Kidney (tissue), 22 donors: ENCODE measurements at regions of chr12 and their contacts with region 1.

Region 1: GRCh38 chr12:120710031-120710804 is at the start of gene UNC119B:
- DNase-seq: peak; percentile 68 to 90 (median 80)
- H3K4me3 ChIP-seq: peak within 1 kb of the TSS; percentile 65 to 80 (median 73)
- H3K27ac ChIP-seq: peak within 1 kb of the TSS; percentile 69 to 83
- H3K4me1 ChIP-seq: peaks cover 3 to 17% (median 14%) of the 10 kb centered on the region in 3 donors
- H3K27me3 ChIP-seq: no peaks in the 10 kb centered on the region
- CTCF ChIP-seq: no peak
- total RNA-seq, gene UNC119B: 44.5 TPM

Region 2: DNA sequence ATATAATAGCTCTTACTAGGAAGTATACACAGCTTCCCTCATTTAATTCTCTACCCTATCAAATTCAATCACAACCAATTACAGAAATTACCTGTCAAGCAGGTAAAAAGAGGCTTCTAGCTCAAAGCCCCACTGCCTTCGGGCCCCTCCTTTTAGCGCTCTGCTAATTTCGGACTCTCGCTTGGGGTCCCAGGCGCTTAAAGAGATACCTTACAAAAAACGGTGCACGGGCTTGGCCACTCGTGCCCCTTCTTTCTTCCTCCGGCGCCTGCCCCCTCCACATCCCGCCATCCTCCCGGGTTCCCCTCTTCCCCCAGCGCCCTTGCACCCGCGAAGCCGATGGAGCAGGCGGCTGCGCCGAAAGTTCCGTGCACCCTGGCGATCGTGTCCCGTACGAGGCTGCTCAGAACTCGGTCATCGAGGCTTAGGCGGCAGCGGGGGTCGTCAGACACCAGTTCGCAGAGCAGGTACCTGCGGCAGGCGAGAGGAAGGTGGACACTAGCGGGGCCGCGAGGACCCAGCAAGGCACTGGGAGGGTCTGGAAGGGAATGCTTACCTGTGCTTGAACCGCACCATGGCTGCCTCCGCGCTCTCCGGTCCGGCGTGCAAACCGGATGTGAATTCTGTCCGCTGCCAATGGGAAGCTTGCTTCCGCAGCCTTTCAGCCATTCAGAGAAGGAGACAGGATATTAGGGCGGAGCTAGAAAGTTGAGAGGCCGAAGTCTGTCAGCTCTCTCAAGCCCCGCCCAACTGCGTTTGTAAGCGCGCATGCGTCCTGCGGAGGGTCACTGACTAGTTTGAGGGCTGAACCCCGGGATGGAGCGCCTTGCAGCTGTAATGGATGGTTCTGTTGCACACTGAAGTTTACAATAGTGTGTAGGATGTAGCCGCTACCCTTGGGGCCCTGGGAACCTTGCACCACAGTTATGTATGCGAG is 129.2 kb before region 1 on chr12 and contains the start of gene POP5:
- intact Hi-C with region 1: loop called (anchors 10 kb)
- DNase-seq: peak; percentile 96 to 99 (median 97)
- H3K4me3 ChIP-seq: peak within 1 kb of the TSS; percentile 80 to 91 (median 89)
- H3K27ac ChIP-seq: peak within 1 kb of the TSS; percentile 8 to 61
- H3K4me1 ChIP-seq: peaks cover 0 to 14% (median 2%) of the 10 kb centered on the region in 3 donors
- H3K27me3 ChIP-seq: peaks cover 3% of the 10 kb centered on the region
- CTCF ChIP-seq: no peak
- total RNA-seq, gene POP5: 50.0 TPM

Region 3: DNA sequence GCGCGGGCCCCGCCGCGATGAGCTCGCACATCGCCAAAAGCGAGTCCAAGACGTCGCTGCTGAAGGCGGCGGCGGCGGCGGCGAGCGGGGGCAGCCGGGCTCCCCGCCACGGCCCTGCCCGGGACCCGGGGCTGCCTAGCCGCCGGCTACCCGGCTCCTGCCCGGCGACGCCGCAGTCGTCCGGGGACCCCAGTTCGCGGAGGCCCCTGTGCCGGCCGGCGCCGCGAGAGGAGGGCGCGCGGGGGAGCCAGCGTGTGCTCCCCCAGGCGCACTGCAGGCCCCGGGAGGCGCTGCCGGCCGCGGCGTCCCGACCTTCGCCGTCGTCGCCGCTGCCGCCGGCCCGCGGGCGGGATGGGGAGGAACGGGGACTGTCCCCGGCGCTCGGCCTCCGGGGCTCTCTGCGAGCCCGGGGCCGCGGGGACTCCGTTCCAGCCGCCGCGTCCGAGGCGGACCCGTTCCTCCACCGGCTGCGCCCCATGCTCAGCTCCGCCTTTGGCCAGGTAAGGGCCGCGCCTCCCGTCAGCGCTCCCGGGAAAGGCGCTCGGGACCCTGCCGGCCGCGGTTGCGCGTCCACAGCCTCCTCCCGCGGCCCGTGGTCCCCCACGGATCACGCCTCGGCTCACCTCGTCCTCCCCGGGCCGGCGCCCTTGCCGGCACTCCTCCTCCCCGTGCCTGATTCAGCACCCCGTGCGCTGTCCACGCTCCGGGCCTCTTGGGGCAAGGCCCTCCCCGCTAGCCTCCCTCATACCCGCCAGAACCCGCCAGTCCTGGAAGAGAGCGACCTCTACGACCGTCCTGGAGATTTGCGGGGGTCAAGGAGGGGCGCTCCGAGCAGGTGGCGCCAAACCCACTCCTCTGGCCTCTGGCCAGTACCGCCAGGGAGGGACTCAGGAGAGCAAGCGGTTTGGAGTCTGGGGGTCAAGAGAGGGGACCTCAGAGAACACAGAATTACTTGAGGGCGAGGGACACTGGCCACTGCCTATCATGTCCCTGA is 69.1 kb before region 1 on chr12:
- intact Hi-C with region 1: loop called (anchors 10 kb)
- DNase-seq: peak; percentile 76 to 88 (median 84)
- H3K4me3 ChIP-seq: peak overlapping the region in 1 of 3 donors; percentile 39
- H3K27ac ChIP-seq: no peak overlapping the region
- H3K4me1 ChIP-seq: peaks cover 0 to 4% (median 0%) of the 10 kb centered on the region in 3 donors
- H3K27me3 ChIP-seq: peaks cover 25% of the 10 kb centered on the region
- CTCF ChIP-seq: no peak